CD4-positive, alpha-beta T cell (primary cell): ENCODE measurements at regions of chr19 and their contacts with region 1.

Region 1: GRCh38 chr19:48588670-48589399 is 17.7 kb upstream of the SPACA4 start:
- DNase-seq: peak; percentile 79 to 93 (median 86)
- ATAC-seq: peak; percentile 91
- H3K4me3 ChIP-seq: peak overlapping the region; percentile 54
- H3K4me3 Mint-ChIP-seq: peak overlapping the region; percentile 78
- H3K27ac ChIP-seq: peak overlapping the region in 1 of 2 donors; percentile 29
- H3K27ac Mint-ChIP-seq: peak overlapping the region; percentile 12
- H3K4me1 ChIP-seq: peaks cover 24% of the 10 kb centered on the region
- H3K4me1 Mint-ChIP-seq: peaks cover 15% of the 10 kb centered on the region
- H3K27me3 ChIP-seq: no peaks in the 10 kb centered on the region
- H3K27me3 Mint-ChIP-seq: peaks cover 5% of the 10 kb centered on the region
- CTCF ChIP-seq: peak; percentile 93

Region 2: DNA sequence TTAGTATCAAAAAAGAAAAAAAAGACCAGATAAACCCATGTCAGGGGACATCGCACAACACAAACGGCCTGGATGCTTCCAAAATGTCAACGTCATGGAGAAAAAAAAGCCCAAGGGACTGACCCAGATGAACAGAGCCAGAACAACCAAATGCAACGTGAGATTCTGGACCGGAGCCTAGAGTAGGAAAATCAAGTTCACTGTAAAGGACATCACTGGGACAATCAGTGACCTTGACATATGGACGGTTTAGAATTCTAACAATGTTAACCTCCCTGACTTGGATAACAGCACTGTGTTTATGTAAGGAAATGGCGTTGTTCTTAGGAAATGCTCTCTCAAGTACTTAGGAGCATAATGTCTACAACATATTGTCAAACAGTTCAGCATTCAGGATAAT is 278.6 kb before region 1 on chr19:
- CTCF ChIA-PET with region 1: no interaction called
- POLR2A ChIA-PET with region 1: no interaction called
- intact Hi-C with region 1: loop called (anchors 2 to 10 kb)
- DNase-seq: no peak
- ATAC-seq: no peak
- H3K4me3 ChIP-seq: no peak overlapping the region
- H3K4me3 Mint-ChIP-seq: no peak overlapping the region
- H3K27ac ChIP-seq: no peak overlapping the region
- H3K27ac Mint-ChIP-seq: no peak overlapping the region
- H3K4me1 ChIP-seq: no peaks in the 10 kb centered on the region
- H3K4me1 Mint-ChIP-seq: no peaks in the 10 kb centered on the region
- H3K27me3 ChIP-seq: no peaks in the 10 kb centered on the region
- H3K27me3 Mint-ChIP-seq: no peaks in the 10 kb centered on the region
- CTCF ChIP-seq: no peak

Region 3: GRCh38 chr19:48351341-48351752 is 237.5 kb before region 1 on chr19:
- CTCF ChIA-PET with region 1: no interaction called
- POLR2A ChIA-PET with region 1: no interaction called
- intact Hi-C with region 1: loop called in 1 of 2 experiments (anchors 1 kb)
- DNase-seq: peak; percentile 66 to 86 (median 76)
- ATAC-seq: peak; percentile 89
- H3K4me3 ChIP-seq: no peak overlapping the region
- H3K4me3 Mint-ChIP-seq: no peak overlapping the region
- H3K27ac ChIP-seq: no peak overlapping the region
- H3K27ac Mint-ChIP-seq: no peak overlapping the region
- H3K4me1 ChIP-seq: peaks cover 5% of the 10 kb centered on the region
- H3K4me1 Mint-ChIP-seq: peaks cover 6% of the 10 kb centered on the region
- H3K27me3 ChIP-seq: no peaks in the 10 kb centered on the region
- H3K27me3 Mint-ChIP-seq: no peaks in the 10 kb centered on the region
- CTCF ChIP-seq: peak; percentile 78

Region 4: GRCh38 chr19:48501496-48502350 is 87.1 kb before region 1 on chr19:
- CTCF ChIA-PET with region 1: interaction called, 30 read pairs
- POLR2A ChIA-PET with region 1: interaction called, 5 read pairs
- intact Hi-C with region 1: loop called (anchors 1 kb)
- DNase-seq: peak in 13 of 14 experiments; percentile 24 to 91 (median 68)
- ATAC-seq: peak; percentile 76
- H3K4me3 ChIP-seq: peak overlapping the region; percentile 34
- H3K4me3 Mint-ChIP-seq: peak overlapping the region; percentile 67
- H3K27ac ChIP-seq: peak overlapping the region in 1 of 2 donors; percentile 41
- H3K27ac Mint-ChIP-seq: no peak overlapping the region
- H3K4me1 ChIP-seq: peaks cover 43% of the 10 kb centered on the region
- H3K4me1 Mint-ChIP-seq: peaks cover 24% of the 10 kb centered on the region
- H3K27me3 ChIP-seq: peaks cover 0 to 20% of the 10 kb centered on the region in 2 experiments
- H3K27me3 Mint-ChIP-seq: peaks cover 11% of the 10 kb centered on the region
- CTCF ChIP-seq: no peak

Region 5: DNA sequence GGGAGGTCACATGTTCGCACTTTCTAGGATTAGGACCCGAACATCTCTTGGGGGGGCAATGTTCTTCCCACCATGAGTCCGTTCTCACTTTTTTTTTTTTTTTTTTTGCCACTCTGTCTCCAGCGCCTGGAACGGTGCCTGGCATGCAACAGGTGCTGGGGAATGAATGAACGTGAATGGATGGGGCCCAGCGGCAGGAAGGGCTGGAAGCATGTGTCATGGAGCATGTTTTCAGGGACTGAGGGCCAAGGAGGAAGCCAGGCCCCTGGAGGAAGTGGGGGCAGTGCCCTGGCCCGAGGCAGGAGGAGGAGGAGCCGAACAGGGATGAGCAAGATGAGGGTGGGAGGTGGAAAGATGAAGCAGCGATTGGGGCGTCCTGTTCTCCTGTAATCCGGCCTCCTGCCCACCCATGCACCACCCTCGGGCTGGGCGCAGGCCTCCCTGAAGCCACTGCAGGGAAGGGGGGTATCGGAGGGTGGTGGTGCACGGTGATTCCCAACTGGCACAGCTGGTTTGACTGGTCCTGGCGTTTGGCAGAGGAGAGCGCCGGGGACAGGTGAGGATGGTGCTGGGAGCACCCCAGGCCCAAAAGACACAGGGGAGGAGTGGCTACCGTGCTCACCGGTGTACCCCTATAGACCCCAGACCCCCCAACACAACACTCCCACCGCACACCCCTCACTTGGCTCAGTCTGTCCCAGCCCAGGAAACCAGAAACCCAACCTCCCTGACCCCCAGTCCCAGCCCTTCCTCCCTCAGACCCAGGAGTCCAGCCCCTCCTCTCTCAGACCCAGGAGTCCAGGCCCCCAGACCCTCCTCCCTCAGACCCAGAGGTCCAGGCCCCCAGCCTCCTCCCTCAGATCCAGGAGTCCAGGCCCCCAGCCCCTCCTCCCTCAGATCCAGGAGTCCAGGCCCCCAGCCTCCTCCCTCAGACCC is 45.4 kb before region 1 on chr19:
- CTCF ChIA-PET with region 1: no interaction called
- POLR2A ChIA-PET with region 1: no interaction called
- intact Hi-C with region 1: no loop called
- DNase-seq: no peak
- ATAC-seq: no peak
- H3K4me3 ChIP-seq: no peak overlapping the region
- H3K4me3 Mint-ChIP-seq: no peak overlapping the region
- H3K27ac ChIP-seq: no peak overlapping the region
- H3K27ac Mint-ChIP-seq: no peak overlapping the region
- H3K4me1 ChIP-seq: no peaks in the 10 kb centered on the region
- H3K4me1 Mint-ChIP-seq: no peaks in the 10 kb centered on the region
- H3K27me3 ChIP-seq: peaks cover 0 to 2% of the 10 kb centered on the region in 2 experiments
- H3K27me3 Mint-ChIP-seq: no peaks in the 10 kb centered on the region
- CTCF ChIP-seq: no peak

Region 6: GRCh38 chr19:48637170-48637947 is 48.5 kb after region 1 on chr19 and contains the start of gene DBP:
- CTCF ChIA-PET with region 1: no interaction called
- POLR2A ChIA-PET with region 1: interaction called, 4 read pairs
- intact Hi-C with region 1: loop called in 1 of 2 experiments (anchors 2 kb)
- DNase-seq: peak; percentile 99 to 100 (median 100)
- ATAC-seq: peak; percentile 69
- H3K4me3 ChIP-seq: peak within 1 kb of the TSS; percentile 71
- H3K4me3 Mint-ChIP-seq: peak within 1 kb of the TSS; percentile 94
- H3K27ac ChIP-seq: peak within 1 kb of the TSS; percentile 86 to 94
- H3K27ac Mint-ChIP-seq: peak within 1 kb of the TSS; percentile 97
- H3K4me1 ChIP-seq: peaks cover 59% of the 10 kb centered on the region
- H3K4me1 Mint-ChIP-seq: peaks cover 50% of the 10 kb centered on the region
- H3K27me3 ChIP-seq: no peaks in the 10 kb centered on the region
- H3K27me3 Mint-ChIP-seq: no peaks in the 10 kb centered on the region
- CTCF ChIP-seq: no peak
- total RNA-seq, gene DBP: 48.3 to 55.6 TPM